Right ventricle myocardium inferior (tissue), 1 donor: ENCODE measurements at regions of chr5 and their contacts with region 1.

Region 1: DNA sequence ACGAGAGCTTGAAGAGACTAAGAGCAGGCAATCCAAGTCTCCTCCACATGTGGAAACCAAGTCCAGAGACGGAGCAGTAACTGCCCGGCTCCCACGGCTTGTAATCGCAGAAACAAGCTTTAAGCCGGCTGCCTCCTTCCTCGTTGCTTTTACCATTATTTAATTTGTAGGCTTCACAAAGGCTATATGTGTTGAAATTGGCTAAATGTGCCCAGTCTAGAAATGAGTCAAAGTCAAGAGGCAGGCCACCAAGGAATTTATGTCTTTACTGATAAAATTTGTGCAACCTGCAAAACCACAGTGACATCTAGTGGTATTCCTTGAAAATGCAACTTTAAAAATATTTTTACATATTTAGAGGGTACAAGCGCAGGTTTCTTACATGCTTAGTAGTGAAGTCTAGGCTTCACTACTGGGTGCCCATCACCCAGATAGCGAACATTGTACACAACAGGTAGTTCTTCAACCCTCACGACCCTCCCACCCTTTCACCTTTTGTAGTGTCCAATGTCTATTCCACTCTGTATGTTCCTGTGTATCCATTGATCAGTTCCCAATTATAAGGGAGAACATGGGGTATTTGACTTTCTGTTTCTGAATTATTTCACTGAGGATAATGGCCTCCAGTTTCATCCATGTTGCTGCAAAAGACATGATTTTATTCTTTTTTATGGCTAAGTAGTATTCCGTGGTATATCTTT is 33.5 kb upstream of the EBF1 start:
- DNase-seq: no peak
- ATAC-seq: peak; percentile 83

Region 2: GRCh38 chr5:157761690-157762621 is 1371.2 kb before region 1 on chr5:
- intact Hi-C with region 1: loop called (anchors 5 kb)
- DNase-seq: no peak
- ATAC-seq: peak; percentile 75

Region 3: DNA sequence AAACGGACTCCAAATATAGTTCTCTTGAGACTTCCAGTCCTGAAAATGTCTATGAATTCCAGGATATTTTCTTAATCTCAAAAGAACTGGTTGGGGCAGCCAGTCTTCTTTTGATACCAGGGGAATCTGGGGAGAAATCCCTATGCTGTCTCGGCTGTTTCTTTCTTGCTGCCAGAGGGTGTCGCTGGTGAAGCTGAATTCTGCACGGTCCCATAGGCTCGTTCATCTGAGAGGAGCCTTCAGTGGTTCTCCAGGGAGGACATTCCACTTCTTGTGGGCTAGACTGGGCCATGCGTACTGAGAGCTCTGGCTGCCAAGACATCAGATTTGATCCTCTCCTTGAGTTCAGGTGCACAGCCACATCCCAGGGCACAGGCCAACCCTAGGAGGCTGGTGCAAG is 1119.3 kb before region 1 on chr5:
- intact Hi-C with region 1: loop called (anchors 10 kb)
- DNase-seq: no peak
- ATAC-seq: peak; percentile 70

Region 4: GRCh38 chr5:158074992-158075769 is 1058.0 kb before region 1 on chr5:
- intact Hi-C with region 1: loop called (anchors 5 kb)
- DNase-seq: no peak
- ATAC-seq: peak; percentile 90

Region 5: GRCh38 chr5:158695595-158696330 is 437.4 kb before region 1 on chr5:
- intact Hi-C with region 1: loop called (anchors 10 kb)
- DNase-seq: peak; percentile 84
- ATAC-seq: peak; percentile 62